ENCODE measurements at regions of chr3 and their contacts with region 1.

Region 1: GRCh38 chr3:125374996-125375941 is at the start of gene ZNF148:
- DNase-seq: peak; percentile 85 to 95 (median 91)
- ATAC-seq: peak; percentile 91
- H3K4me3 ChIP-seq: peak within 1 kb of the TSS; percentile 71 to 89
- H3K4me3 Mint-ChIP-seq: peak within 1 kb of the TSS; percentile 94
- H3K27ac ChIP-seq: peak within 1 kb of the TSS; percentile 94 to 95
- H3K27ac Mint-ChIP-seq: peak within 1 kb of the TSS; percentile 98
- H3K4me1 ChIP-seq: peaks cover 29% of the 10 kb centered on the region
- H3K4me1 Mint-ChIP-seq: peaks cover 41% of the 10 kb centered on the region
- H3K27me3 ChIP-seq: no peaks in the 10 kb centered on the region
- H3K27me3 Mint-ChIP-seq: no peaks in the 10 kb centered on the region
- CTCF ChIP-seq: no peak
- total RNA-seq, gene ZNF148: 32.2 to 35.9 TPM

Region 2: GRCh38 chr3:124730129-124730940 is 644.9 kb before region 1 on chr3 and contains the start of gene UMPS:
- CTCF ChIA-PET with region 1: no interaction called
- POLR2A ChIA-PET with region 1: interaction called, 4 read pairs
- intact Hi-C with region 1: loop called (anchors 5 kb)
- DNase-seq: peak; percentile 82 to 95 (median 93)
- ATAC-seq: peak; percentile 91
- H3K4me3 ChIP-seq: peak within 1 kb of the TSS; percentile 96 to 97
- H3K4me3 Mint-ChIP-seq: peak within 1 kb of the TSS; percentile 99
- H3K27ac ChIP-seq: peak within 1 kb of the TSS; percentile 82 to 93
- H3K27ac Mint-ChIP-seq: peak within 1 kb of the TSS; percentile 99
- H3K4me1 ChIP-seq: peaks cover 29% of the 10 kb centered on the region
- H3K4me1 Mint-ChIP-seq: peaks cover 39% of the 10 kb centered on the region
- H3K27me3 ChIP-seq: peaks cover 0 to 4% of the 10 kb centered on the region in 2 experiments
- H3K27me3 Mint-ChIP-seq: peaks cover 10% of the 10 kb centered on the region
- CTCF ChIP-seq: no peak
- total RNA-seq, gene UMPS: 16.7 to 19.8 TPM

Region 3: DNA sequence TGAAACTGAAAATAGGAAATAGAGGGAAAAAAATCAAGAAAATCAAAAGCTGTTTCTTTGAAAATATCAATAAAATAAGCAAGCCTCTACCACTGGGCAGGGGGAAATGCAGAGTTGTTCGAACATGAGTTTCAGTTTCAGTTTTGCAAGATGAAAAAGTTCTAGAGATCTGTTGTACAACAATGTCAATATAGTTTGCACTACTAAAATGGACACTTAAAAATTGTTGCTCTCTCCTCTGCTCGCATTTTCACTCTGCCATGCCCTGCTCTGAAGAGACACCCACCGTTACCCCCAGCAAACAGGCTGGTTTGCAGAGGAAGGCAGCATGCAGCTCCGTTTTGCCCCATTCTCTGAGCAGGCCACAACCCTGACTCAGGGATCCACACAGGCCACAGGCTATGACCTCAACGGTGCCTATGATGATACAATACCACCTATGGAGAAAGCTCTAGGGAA is 64.6 kb before region 1 on chr3:
- CTCF ChIA-PET with region 1: no interaction called
- POLR2A ChIA-PET with region 1: interaction called, 4 read pairs
- intact Hi-C with region 1: loop called (anchors 2 to 5 kb)
- DNase-seq: peak; percentile 13 to 73 (median 58)
- ATAC-seq: peak; percentile 92
- H3K4me3 ChIP-seq: peak overlapping the region; percentile 25 to 43
- H3K4me3 Mint-ChIP-seq: peak overlapping the region; percentile 90
- H3K27ac ChIP-seq: peak overlapping the region; percentile 12 to 78
- H3K27ac Mint-ChIP-seq: peak overlapping the region; percentile 96
- H3K4me1 ChIP-seq: peaks cover 18% of the 10 kb centered on the region
- H3K4me1 Mint-ChIP-seq: peaks cover 53% of the 10 kb centered on the region
- H3K27me3 ChIP-seq: no peaks in the 10 kb centered on the region
- H3K27me3 Mint-ChIP-seq: no peaks in the 10 kb centered on the region
- CTCF ChIP-seq: no peak

Region 4: DNA sequence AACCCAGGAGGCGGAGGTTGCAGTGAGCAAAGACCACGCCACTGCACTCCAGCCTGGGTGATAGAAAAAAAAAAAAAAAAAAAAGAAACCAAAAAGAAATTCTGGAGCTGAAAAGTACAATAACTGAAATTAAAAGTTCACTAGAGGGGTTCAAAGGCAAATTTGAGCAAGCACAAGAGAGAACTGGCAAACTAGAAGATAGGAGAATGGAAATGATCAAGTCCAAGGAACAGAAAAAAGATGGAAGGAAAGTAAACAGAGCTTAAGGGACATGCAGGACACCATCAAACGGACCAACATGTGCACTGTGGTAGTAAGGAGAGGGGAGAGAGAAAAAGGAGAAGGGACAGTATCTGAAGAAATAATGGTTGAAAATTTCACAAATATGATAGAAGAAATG is 131.9 kb after region 1 on chr3:
- CTCF ChIA-PET with region 1: no interaction called
- POLR2A ChIA-PET with region 1: no interaction called
- intact Hi-C with region 1: no loop called
- DNase-seq: no peak
- ATAC-seq: no peak
- H3K4me3 ChIP-seq: no peak overlapping the region
- H3K4me3 Mint-ChIP-seq: no peak overlapping the region
- H3K27ac ChIP-seq: no peak overlapping the region
- H3K27ac Mint-ChIP-seq: no peak overlapping the region
- H3K4me1 ChIP-seq: no peaks in the 10 kb centered on the region
- H3K4me1 Mint-ChIP-seq: peaks cover 15% of the 10 kb centered on the region
- H3K27me3 ChIP-seq: no peaks in the 10 kb centered on the region
- H3K27me3 Mint-ChIP-seq: no peaks in the 10 kb centered on the region
- CTCF ChIP-seq: no peak

Region 5: GRCh38 chr3:125519678-125520589 is 144.7 kb after region 1 on chr3 and contains the start of gene SNX4:
- CTCF ChIA-PET with region 1: no interaction called
- POLR2A ChIA-PET with region 1: no interaction called
- intact Hi-C with region 1: loop called (anchors 1 to 5 kb)
- DNase-seq: peak; percentile 73 to 91 (median 86)
- ATAC-seq: peak; percentile 96
- H3K4me3 ChIP-seq: peak within 1 kb of the TSS; percentile 66 to 77
- H3K4me3 Mint-ChIP-seq: peak within 1 kb of the TSS; percentile 97
- H3K27ac ChIP-seq: peak within 1 kb of the TSS; percentile 60 to 61
- H3K27ac Mint-ChIP-seq: peak within 1 kb of the TSS; percentile 95
- H3K4me1 ChIP-seq: peaks cover 12% of the 10 kb centered on the region
- H3K4me1 Mint-ChIP-seq: peaks cover 46% of the 10 kb centered on the region
- H3K27me3 ChIP-seq: no peaks in the 10 kb centered on the region
- H3K27me3 Mint-ChIP-seq: no peaks in the 10 kb centered on the region
- CTCF ChIP-seq: no peak
- total RNA-seq, gene SNX4: 26.4 to 29.7 TPM

Region 6: GRCh38 chr3:125916376-125916978 is 541.2 kb after region 1 on chr3:
- CTCF ChIA-PET with region 1: no interaction called
- POLR2A ChIA-PET with region 1: no interaction called
- intact Hi-C with region 1: loop called in 1 of 2 experiments (anchors 10 kb)
- DNase-seq: peak; percentile 89 to 98 (median 94)
- ATAC-seq: peak; percentile 94
- H3K4me3 ChIP-seq: peak overlapping the region; percentile 61 to 81
- H3K4me3 Mint-ChIP-seq: peak overlapping the region; percentile 90
- H3K27ac ChIP-seq: peak overlapping the region; percentile 74 to 84
- H3K27ac Mint-ChIP-seq: peak overlapping the region; percentile 96
- H3K4me1 ChIP-seq: peaks cover 6% of the 10 kb centered on the region
- H3K4me1 Mint-ChIP-seq: peaks cover 19% of the 10 kb centered on the region
- H3K27me3 ChIP-seq: no peaks in the 10 kb centered on the region
- H3K27me3 Mint-ChIP-seq: no peaks in the 10 kb centered on the region
- CTCF ChIP-seq: peak; percentile 18